Naive thymus-derived CD4-positive, alpha-beta T cell (primary cell): ENCODE measurements at regions of chr1 and their contacts with region 1.

Region 1: DNA sequence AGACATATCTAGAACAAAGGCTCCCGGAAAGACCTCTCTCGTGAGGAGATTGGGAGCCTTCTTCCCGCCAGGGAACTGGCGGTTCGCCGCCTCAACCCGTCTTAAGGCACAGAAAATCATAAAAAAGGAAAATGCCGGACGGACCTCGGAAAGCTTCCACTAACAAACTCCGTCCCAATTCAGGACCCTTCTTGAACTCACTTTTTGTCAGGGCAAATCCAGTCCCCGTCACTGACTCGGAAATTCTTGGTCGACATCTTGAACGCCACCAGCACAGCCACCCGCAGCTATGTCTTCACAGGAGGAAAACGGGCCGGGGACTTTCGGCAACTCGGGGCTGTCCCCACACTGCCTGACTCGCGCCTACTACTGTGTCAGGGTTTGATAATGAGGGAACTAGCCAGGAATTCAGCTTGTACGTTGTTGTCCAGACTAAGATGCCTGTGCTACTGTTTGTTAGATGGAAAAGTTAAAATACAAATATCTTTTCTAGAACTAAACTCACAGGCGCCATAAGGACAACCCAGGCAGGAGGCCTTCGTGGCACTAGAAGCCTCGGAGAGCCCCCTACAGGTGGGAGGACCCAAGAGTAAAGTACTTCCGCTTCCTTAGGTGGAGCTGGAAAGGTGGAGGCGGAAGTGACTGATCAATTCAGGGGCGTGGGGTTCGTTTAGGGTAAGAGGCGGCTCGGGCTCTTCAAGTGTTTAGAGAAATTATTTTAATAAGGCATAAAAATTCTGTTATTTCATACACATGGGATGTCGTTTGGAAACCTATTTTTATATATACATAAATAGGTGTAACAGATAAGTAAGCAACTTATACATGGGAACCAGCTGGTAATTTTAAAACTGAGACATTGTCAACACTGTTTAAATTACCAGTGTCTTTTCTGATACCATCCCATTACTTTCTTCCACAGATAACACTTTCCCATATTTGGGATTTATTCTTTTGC is at the start of gene ZRANB2:
- DNase-seq: peak; percentile 74 to 96 (median 94)
- ATAC-seq: peak; percentile 98
- H3K4me3 ChIP-seq: peak within 1 kb of the TSS; percentile 87
- H3K4me3 Mint-ChIP-seq: peak within 1 kb of the TSS; percentile 93 to 100 (median 99)
- H3K27ac ChIP-seq: peak within 1 kb of the TSS; percentile 95
- H3K27ac Mint-ChIP-seq: peak within 1 kb of the TSS; percentile 98 to 100 (median 99)
- H3K4me1 ChIP-seq: peaks cover 15 to 19% of the 10 kb centered on the region in 2 donors
- H3K4me1 Mint-ChIP-seq: peaks cover 7 to 55% (median 39%) of the 10 kb centered on the region in 7 donors
- H3K27me3 ChIP-seq: no peaks in the 10 kb centered on the region
- H3K27me3 Mint-ChIP-seq: peaks cover 12 to 28% (median 17%) of the 10 kb centered on the region in 5 donors
- total RNA-seq, gene ZRANB2: 84.9 to 167 (median 121) TPM

Region 2: GRCh38 chr1:70221241-70222121 is 859.5 kb before region 1 on chr1 and contains the start of gene SRSF11:
- CTCF ChIA-PET with region 1: interaction called, 3 read pairs
- POLR2A ChIA-PET with region 1: interaction called, 10 read pairs
- intact Hi-C with region 1: loop called (anchors 1 kb)
- DNase-seq: peak; percentile 93 to 98 (median 96)
- ATAC-seq: peak; percentile 98
- H3K4me3 ChIP-seq: peak within 1 kb of the TSS; percentile 85
- H3K4me3 Mint-ChIP-seq: peak within 1 kb of the TSS; percentile 86 to 95 (median 91)
- H3K27ac ChIP-seq: peak within 1 kb of the TSS; percentile 95
- H3K27ac Mint-ChIP-seq: peak within 1 kb of the TSS; percentile 92 to 99 (median 96)
- H3K4me1 ChIP-seq: peaks cover 22 to 32% of the 10 kb centered on the region in 2 donors
- H3K4me1 Mint-ChIP-seq: peaks cover 29 to 65% (median 54%) of the 10 kb centered on the region in 7 donors
- H3K27me3 ChIP-seq: no peaks in the 10 kb centered on the region
- H3K27me3 Mint-ChIP-seq: peaks cover 0 to 2% (median 0%) of the 10 kb centered on the region in 5 donors
- total RNA-seq, gene SRSF11: 190 to 413 (median 372) TPM

Region 3: DNA sequence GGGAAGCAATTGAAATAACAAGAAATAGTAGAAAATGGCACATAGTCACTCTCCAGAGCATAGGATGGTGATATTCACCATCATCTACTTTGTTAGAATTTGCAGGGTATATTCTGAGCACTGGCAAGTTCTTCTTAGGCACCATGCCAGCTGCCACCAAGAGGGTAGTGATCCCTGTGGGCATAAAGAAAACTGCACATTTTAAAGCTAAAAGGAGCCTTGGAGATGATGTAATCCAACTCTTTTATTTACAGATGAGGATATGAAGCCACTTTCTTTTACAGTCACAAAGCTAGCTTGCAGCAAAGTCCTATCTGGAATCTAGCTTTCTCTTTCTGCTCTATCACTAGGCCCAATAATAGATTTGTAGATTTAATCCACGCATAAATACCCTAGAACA is 102.4 kb before region 1 on chr1:
- CTCF ChIA-PET with region 1: no interaction called
- POLR2A ChIA-PET with region 1: no interaction called
- intact Hi-C with region 1: no loop called
- DNase-seq: no peak
- ATAC-seq: peak; percentile 34
- H3K4me3 ChIP-seq: no peak overlapping the region
- H3K4me3 Mint-ChIP-seq: no peak overlapping the region
- H3K27ac ChIP-seq: no peak overlapping the region
- H3K27ac Mint-ChIP-seq: no peak overlapping the region
- H3K4me1 ChIP-seq: no peaks in the 10 kb centered on the region
- H3K4me1 Mint-ChIP-seq: peaks cover 0 to 3% (median 0%) of the 10 kb centered on the region in 7 donors
- H3K27me3 ChIP-seq: no peaks in the 10 kb centered on the region
- H3K27me3 Mint-ChIP-seq: peaks cover 7 to 61% (median 37%) of the 10 kb centered on the region in 5 donors

Region 4: GRCh38 chr1:71068325-71069240 is 12.4 kb before region 1 on chr1:
- CTCF ChIA-PET with region 1: interaction called, 3 read pairs
- POLR2A ChIA-PET with region 1: interaction called, 7 read pairs
- intact Hi-C with region 1: loop called (anchors 1 kb)
- DNase-seq: no peak
- ATAC-seq: no peak
- H3K4me3 ChIP-seq: no peak overlapping the region
- H3K4me3 Mint-ChIP-seq: peak overlapping the region in 1 of 10 donors; percentile 54
- H3K27ac ChIP-seq: no peak overlapping the region
- H3K27ac Mint-ChIP-seq: peak overlapping the region in 5 of 9 donors; percentile 14 to 84 (median 40)
- H3K4me1 ChIP-seq: no peaks in the 10 kb centered on the region
- H3K4me1 Mint-ChIP-seq: peaks cover 7 to 38% (median 10%) of the 10 kb centered on the region in 7 donors
- H3K27me3 ChIP-seq: no peaks in the 10 kb centered on the region
- H3K27me3 Mint-ChIP-seq: no peaks in the 10 kb centered on the region